ENCODE measurements at regions of chr19 and their contacts with region 1.

Region 1: GRCh38 chr19:40598121-40598917 is 2.9 kb upstream of the LTBP4 start:
- DNase-seq: peak; percentile 85 to 97 (median 92)
- ATAC-seq: peak; percentile 78
- H3K4me3 ChIP-seq: no peak overlapping the region
- H3K27ac ChIP-seq: no peak overlapping the region
- H3K4me1 ChIP-seq: peaks cover 18 to 64% of the 10 kb centered on the region in 2 donors
- H3K27me3 ChIP-seq: peaks cover 42 to 90% of the 10 kb centered on the region in 2 donors
- CTCF ChIP-seq: peak; percentile 98 to 99

Region 2: DNA sequence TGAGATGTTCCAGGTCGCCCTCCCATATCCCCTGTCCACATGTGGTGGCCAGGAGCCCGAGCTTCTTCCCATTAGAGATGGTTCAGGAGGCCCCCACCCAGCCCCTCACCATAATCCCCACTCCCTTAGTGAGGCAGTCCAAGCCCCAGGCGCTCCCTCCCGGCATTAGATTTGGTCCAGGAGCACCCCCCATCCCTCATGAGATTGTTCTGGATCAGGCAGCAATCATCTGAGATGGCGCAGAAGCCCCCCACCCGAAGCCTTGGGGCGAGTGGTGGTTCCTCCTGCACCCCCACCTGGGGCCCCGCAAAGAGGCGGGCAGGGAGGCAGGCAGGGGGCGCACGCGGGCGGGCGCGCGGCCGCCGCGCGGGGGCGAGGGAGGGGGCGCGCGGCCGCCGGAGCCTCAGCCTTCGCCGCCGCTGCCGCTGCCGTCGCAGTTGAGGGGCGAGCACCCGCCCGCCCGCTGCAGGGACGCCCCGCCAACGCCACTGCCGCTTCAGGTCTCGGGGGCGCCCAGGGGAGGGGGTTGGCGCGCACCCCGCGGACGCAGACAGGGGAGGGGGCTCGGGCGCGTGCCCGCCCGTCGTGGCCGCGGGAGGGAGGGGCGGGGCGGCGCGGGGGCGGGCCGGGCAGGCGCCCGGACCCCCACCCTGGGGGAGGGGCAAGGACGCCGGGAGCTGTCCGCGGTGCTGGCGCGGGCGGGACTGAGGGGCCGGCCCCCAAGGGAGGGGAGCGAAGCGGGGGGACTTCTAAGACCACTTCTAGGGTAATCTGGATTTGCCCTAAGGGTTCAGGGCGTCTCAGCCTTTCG is 68.0 kb before region 1 on chr19:
- intact Hi-C with region 1: loop called in 1 of 2 experiments (anchors 10 kb)
- DNase-seq: peak in 1 of 4 donors; percentile 53
- ATAC-seq: peak; percentile 26
- H3K4me3 ChIP-seq: no peak overlapping the region
- H3K27ac ChIP-seq: no peak overlapping the region
- H3K4me1 ChIP-seq: peaks cover 0 to 15% of the 10 kb centered on the region in 2 donors
- H3K27me3 ChIP-seq: peaks cover 0 to 49% of the 10 kb centered on the region in 2 donors
- CTCF ChIP-seq: no peak